Breast epithelium (tissue), 4 donors: ENCODE measurements at regions of chr6 and their contacts with region 1.

Region 1: GRCh38 chr6:45991189-45991588 is 24.5 kb downstream of the CLIC5 start:
- DNase-seq: no peak
- H3K4me3 ChIP-seq: no peak overlapping the region
- H3K27ac ChIP-seq: no peak overlapping the region
- H3K4me1 ChIP-seq: no peaks in the 10 kb centered on the region
- H3K27me3 ChIP-seq: no peaks in the 10 kb centered on the region
- CTCF ChIP-seq: no peak
- POLR2A ChIP-seq: no peak

Region 2: DNA sequence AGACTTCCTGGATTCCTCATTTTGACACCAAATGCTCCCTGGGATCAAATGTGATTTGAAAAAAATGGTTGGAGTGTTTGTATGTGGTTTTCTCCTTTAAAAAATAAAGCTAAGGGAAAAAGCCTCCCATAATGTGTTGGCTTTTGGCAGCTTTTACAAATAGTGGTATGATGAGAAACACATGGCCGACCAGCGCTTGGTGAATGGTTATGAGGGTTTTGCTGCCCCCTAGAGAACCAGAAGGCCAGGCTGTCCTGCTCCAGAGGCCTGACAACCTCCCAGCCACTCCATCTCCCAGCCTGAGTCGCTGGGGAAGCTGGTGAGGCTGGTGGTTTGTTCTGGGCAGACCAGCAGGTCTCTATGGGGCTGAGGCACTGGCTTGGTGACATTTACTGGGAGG is 44.8 kb before region 1 on chr6:
- intact Hi-C with region 1: no loop called
- DNase-seq: no peak
- H3K4me3 ChIP-seq: no peak overlapping the region
- H3K27ac ChIP-seq: peak overlapping the region in 1 of 2 donors; percentile 21
- H3K4me1 ChIP-seq: no peaks in the 10 kb centered on the region
- H3K27me3 ChIP-seq: no peaks in the 10 kb centered on the region
- CTCF ChIP-seq: no peak
- POLR2A ChIP-seq: no peak

Region 3: DNA sequence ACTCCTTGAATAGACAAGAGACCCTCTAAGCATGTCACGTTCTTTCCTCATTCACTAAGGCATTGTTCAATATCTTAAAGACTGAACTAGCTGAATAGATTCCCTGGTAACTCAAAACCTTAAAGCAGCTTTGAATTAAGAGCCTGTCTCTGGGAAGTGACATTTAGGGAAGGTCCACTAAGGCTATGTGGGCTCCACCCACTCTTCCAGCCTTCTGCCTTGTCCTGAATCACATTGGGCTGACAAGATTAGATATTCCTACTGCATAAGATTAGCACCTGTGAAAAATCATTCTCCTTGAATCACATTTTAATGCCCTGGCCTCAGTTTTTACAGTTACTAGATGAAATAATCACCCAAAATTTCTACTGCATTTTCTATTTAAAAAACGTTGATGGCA is 11.9 kb before region 1 on chr6:
- intact Hi-C with region 1: loop called (anchors 1 kb)
- DNase-seq: no peak
- H3K4me3 ChIP-seq: no peak overlapping the region
- H3K27ac ChIP-seq: no peak overlapping the region
- H3K4me1 ChIP-seq: no peaks in the 10 kb centered on the region
- H3K27me3 ChIP-seq: no peaks in the 10 kb centered on the region
- CTCF ChIP-seq: no peak
- POLR2A ChIP-seq: no peak

Region 4: GRCh38 chr6:46062306-46062706 is 71.1 kb after region 1 on chr6:
- intact Hi-C with region 1: no loop called
- DNase-seq: no peak
- H3K4me3 ChIP-seq: no peak overlapping the region
- H3K27ac ChIP-seq: no peak overlapping the region
- H3K4me1 ChIP-seq: no peaks in the 10 kb centered on the region
- H3K27me3 ChIP-seq: no peaks in the 10 kb centered on the region
- CTCF ChIP-seq: no peak
- POLR2A ChIP-seq: no peak